ENCODE measurements at regions of chr10 and their contacts with region 1.

Region 1: DNA sequence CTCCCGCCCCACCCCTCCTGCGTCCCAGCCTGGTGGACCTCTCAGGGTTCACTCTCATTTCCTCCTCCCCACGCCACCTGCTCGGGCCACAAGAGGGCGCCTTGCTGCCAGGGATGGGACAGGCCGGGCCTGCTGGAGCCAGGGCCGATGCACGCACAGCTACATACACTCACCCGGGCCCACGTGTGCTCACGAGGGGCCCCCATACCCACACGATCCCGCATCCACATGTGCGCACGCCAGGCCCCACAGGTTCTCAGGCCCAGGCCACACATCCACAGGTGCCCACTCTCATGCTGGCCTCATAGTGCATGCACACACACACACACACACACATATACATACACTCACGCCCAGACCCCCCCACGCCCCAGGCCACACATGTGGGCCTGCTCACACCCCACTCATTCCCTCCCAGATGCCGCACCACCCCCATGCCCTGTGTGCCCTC is 68.6 kb downstream of the LHPP start:
- DNase-seq: peak; percentile 93
- ATAC-seq: peak; percentile 86
- H3K4me3 ChIP-seq: no peak overlapping the region
- H3K4me3 Mint-ChIP-seq: peak overlapping the region; percentile 74
- H3K27ac ChIP-seq: no peak overlapping the region
- H3K27ac Mint-ChIP-seq: peak overlapping the region; percentile 92
- H3K4me1 ChIP-seq: peaks cover 37 to 53% of the 10 kb centered on the region in 2 donors
- H3K4me1 Mint-ChIP-seq: peaks cover 50% of the 10 kb centered on the region
- H3K27me3 ChIP-seq: no peaks in the 10 kb centered on the region
- H3K27me3 Mint-ChIP-seq: no peaks in the 10 kb centered on the region
- CTCF ChIP-seq: peak; percentile 86

Region 2: DNA sequence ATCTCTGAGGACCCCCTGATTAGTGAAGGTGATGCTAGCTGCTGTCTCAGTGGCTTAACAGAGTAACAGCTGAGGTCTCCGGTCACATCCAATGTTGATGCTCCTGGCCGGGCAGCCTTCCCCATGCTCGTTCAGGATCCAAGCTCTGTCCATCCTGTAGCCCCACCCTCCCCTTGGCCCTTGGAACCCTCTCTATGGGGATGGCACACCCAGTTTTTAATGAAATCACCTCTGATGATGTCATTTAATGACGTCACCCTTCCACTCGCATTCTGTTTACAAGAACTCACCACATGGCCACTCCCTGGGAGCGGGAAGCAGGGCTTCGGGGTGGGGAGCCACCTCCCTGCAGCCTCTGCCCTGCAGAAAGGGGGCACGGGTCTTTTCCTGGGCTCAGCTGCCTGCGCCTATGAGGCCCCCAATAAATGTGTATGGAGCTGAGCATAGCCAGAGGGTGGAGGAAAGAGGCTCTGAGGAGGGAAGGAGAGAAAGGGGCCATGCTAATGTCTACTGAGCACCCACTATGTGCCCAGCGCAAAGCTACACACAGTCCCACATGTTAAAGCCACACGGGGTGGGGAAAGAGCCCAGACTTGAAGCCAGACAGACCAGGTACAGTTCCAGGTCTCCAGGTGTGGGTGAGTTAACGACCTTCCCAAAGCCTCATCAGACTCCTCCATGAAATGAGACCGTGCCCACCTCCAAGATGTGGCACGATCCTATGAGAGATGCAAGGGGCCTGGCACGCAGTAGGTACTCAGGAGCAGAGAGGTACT is 206.9 kb before region 1 on chr10:
- CTCF ChIA-PET with region 1: no interaction called
- POLR2A ChIA-PET with region 1: no interaction called
- intact Hi-C with region 1: no loop called
- DNase-seq: no peak
- ATAC-seq: no peak
- H3K4me3 ChIP-seq: no peak overlapping the region
- H3K4me3 Mint-ChIP-seq: no peak overlapping the region
- H3K27ac ChIP-seq: no peak overlapping the region
- H3K27ac Mint-ChIP-seq: no peak overlapping the region
- H3K4me1 ChIP-seq: no peaks in the 10 kb centered on the region
- H3K4me1 Mint-ChIP-seq: no peaks in the 10 kb centered on the region
- H3K27me3 ChIP-seq: no peaks in the 10 kb centered on the region
- H3K27me3 Mint-ChIP-seq: peaks cover 20% of the 10 kb centered on the region
- CTCF ChIP-seq: no peak

Region 3: DNA sequence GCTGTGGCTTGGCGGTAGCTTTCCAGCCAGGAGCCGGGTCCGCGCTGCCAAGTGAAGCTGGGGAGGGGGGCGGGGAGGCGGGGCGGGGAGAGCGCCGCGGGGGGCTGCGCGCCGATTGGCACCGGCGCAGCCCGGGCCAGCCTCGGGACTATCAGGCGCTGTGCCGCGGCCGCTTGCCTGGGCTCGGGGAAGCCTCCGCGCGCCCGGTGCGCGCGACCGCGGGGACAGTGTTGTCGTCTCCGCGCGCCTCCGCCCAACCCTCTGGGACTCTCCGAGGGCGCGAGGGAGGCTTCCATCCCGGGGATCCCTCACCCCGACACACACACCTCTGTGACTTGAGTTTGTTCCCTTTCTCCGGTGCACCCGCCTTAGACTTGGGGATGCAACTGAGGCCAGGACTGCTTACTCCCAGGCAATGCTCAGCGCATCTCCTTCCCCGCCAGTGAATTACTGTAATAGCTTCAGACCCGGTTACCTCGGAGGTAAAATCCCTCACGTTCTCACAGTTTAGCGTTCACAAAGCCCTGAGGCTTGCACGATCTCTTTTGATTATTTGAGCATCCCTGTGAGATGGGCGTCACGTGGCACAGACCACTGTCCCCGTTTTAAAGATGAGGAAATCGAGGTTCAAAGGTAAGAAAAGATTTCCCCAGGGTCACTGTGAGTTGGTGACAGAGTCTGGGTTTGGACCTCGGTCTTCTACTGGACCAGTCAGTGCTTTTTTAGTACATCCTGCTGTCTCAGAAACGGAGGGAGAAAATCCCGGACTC is 80.0 kb before region 1 on chr10 and contains the start of gene NKX1-2:
- CTCF ChIA-PET with region 1: no interaction called
- POLR2A ChIA-PET with region 1: no interaction called
- intact Hi-C with region 1: no loop called
- DNase-seq: peak; percentile 46
- ATAC-seq: no peak
- H3K4me3 ChIP-seq: peak within 1 kb of the TSS in 2 of 5 experiments; percentile 9 to 16
- H3K4me3 Mint-ChIP-seq: peak within 1 kb of the TSS; percentile 81
- H3K27ac ChIP-seq: no peak within 1 kb of the TSS
- H3K27ac Mint-ChIP-seq: no peak within 1 kb of the TSS
- H3K4me1 ChIP-seq: peaks cover 31 to 42% of the 10 kb centered on the region in 2 donors
- H3K4me1 Mint-ChIP-seq: peaks cover 28% of the 10 kb centered on the region
- H3K27me3 ChIP-seq: peaks cover 0 to 77% (median 52%) of the 10 kb centered on the region in 4 experiments
- H3K27me3 Mint-ChIP-seq: peaks cover 75% of the 10 kb centered on the region
- CTCF ChIP-seq: no peak
- total RNA-seq, gene NKX1-2: not detected in 2 replicates

Region 4: DNA sequence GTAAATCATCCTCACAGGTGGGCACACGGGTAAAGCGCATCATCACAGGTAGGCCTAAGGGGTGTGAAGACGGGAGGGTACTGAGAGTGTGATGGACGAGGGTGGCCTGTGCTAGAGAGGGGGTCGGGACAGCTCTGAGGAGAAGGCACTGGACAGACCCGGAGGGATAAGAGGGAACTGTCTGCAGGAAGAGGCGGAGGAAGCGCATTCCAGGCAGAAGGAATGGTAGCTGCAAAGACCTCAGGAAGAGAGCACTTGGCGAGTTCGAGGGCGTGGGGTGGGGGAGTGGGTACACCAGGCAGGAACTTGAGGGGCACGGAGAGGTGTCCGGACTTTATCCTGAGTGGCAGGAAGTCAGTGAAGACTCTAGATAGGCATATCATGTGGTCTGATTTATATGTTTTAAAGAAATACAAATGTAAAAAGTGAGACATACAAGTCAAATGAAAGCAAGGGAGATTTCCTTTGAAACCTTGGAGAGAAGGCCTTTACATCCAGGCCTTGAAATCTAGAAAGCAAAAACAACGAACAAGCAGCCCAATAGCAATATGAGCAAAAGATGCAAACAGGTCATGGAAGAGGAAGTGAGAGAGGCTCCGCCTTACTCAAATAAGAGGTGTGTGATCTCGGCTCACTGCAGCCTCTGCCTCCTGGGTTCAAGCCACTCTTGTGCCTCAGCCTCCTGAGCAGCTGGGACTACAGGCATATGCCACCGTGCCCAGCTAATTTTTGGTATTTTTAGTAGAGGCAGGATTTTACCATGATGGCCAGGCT is 65.0 kb before region 1 on chr10:
- CTCF ChIA-PET with region 1: no interaction called
- POLR2A ChIA-PET with region 1: no interaction called
- intact Hi-C with region 1: no loop called
- DNase-seq: peak; percentile 66
- ATAC-seq: peak; percentile 35
- H3K4me3 ChIP-seq: peak overlapping the region in 3 of 5 experiments; percentile 13 to 26 (median 23)
- H3K4me3 Mint-ChIP-seq: peak overlapping the region; percentile 64
- H3K27ac ChIP-seq: peak overlapping the region; percentile 67 to 69
- H3K27ac Mint-ChIP-seq: peak overlapping the region; percentile 92
- H3K4me1 ChIP-seq: peaks cover 23 to 35% of the 10 kb centered on the region in 2 donors
- H3K4me1 Mint-ChIP-seq: peaks cover 37% of the 10 kb centered on the region
- H3K27me3 ChIP-seq: no peaks in the 10 kb centered on the region
- H3K27me3 Mint-ChIP-seq: no peaks in the 10 kb centered on the region
- CTCF ChIP-seq: no peak

Region 5: GRCh38 chr10:124565565-124566256 is 35.5 kb after region 1 on chr10:
- CTCF ChIA-PET with region 1: interaction called, 27 read pairs
- POLR2A ChIA-PET with region 1: interaction called, 3 read pairs
- intact Hi-C with region 1: loop called (anchors 5 kb)
- DNase-seq: peak; percentile 49
- ATAC-seq: peak; percentile 45
- H3K4me3 ChIP-seq: no peak overlapping the region
- H3K4me3 Mint-ChIP-seq: no peak overlapping the region
- H3K27ac ChIP-seq: no peak overlapping the region
- H3K27ac Mint-ChIP-seq: no peak overlapping the region
- H3K4me1 ChIP-seq: peaks cover 35 to 40% of the 10 kb centered on the region in 2 donors
- H3K4me1 Mint-ChIP-seq: peaks cover 51% of the 10 kb centered on the region
- H3K27me3 ChIP-seq: no peaks in the 10 kb centered on the region
- H3K27me3 Mint-ChIP-seq: no peaks in the 10 kb centered on the region
- CTCF ChIP-seq: no peak

Region 6: DNA sequence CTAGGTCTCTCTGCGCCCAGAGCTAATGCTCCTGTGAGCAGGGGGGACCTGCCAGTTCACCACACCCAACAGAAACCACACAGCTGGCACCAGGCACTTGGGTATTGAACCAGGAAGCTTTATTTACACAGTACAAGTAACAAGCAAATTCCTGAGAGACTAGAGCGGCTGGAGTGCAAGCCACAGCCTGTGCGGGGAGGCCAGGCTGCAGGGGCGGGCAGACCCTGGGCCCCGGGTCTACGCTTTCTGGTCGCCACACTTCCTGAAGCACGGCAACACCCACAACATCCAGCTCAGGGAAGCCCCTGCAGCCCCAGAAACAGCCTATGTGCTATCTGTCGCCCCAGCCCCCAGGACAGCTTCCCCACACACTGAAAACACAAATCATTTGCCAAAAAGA is 89.0 kb after region 1 on chr10:
- CTCF ChIA-PET with region 1: interaction called, 100 read pairs
- POLR2A ChIA-PET with region 1: interaction called, 9 read pairs
- intact Hi-C with region 1: no loop called
- DNase-seq: peak; percentile 84
- ATAC-seq: peak; percentile 75
- H3K4me3 ChIP-seq: peak overlapping the region in 4 of 5 experiments; percentile 19 to 55 (median 28)
- H3K4me3 Mint-ChIP-seq: peak overlapping the region; percentile 87
- H3K27ac ChIP-seq: peak overlapping the region; percentile 97 to 98
- H3K27ac Mint-ChIP-seq: peak overlapping the region; percentile 99
- H3K4me1 ChIP-seq: peaks cover 96 to 100% of the 10 kb centered on the region in 2 donors
- H3K4me1 Mint-ChIP-seq: peaks cover 93% of the 10 kb centered on the region
- H3K27me3 ChIP-seq: no peaks in the 10 kb centered on the region
- H3K27me3 Mint-ChIP-seq: no peaks in the 10 kb centered on the region
- CTCF ChIP-seq: no peak

Region 7: GRCh38 chr10:124647421-124648130 is 117.3 kb after region 1 on chr10:
- CTCF ChIA-PET with region 1: interaction called, 24 read pairs
- POLR2A ChIA-PET with region 1: no interaction called
- intact Hi-C with region 1: no loop called
- DNase-seq: peak; percentile 80
- ATAC-seq: peak; percentile 78
- H3K4me3 ChIP-seq: peak overlapping the region in 4 of 5 experiments; percentile 15 to 45 (median 26)
- H3K4me3 Mint-ChIP-seq: peak overlapping the region; percentile 85
- H3K27ac ChIP-seq: peak overlapping the region; percentile 71 to 92
- H3K27ac Mint-ChIP-seq: peak overlapping the region; percentile 97
- H3K4me1 ChIP-seq: peaks cover 99 to 100% of the 10 kb centered on the region in 2 donors
- H3K4me1 Mint-ChIP-seq: peaks cover 99% of the 10 kb centered on the region
- H3K27me3 ChIP-seq: no peaks in the 10 kb centered on the region
- H3K27me3 Mint-ChIP-seq: no peaks in the 10 kb centered on the region
- CTCF ChIP-seq: peak; percentile 25

Region 8: GRCh38 chr10:124732931-124733570 is 202.8 kb after region 1 on chr10:
- CTCF ChIA-PET with region 1: interaction called, 24 read pairs
- POLR2A ChIA-PET with region 1: no interaction called
- intact Hi-C with region 1: no loop called
- DNase-seq: peak; percentile 61
- ATAC-seq: peak; percentile 34
- H3K4me3 ChIP-seq: peak overlapping the region in 2 of 5 experiments; percentile 13 to 39
- H3K4me3 Mint-ChIP-seq: peak overlapping the region; percentile 52
- H3K27ac ChIP-seq: peak overlapping the region; percentile 80 to 98
- H3K27ac Mint-ChIP-seq: peak overlapping the region; percentile 79
- H3K4me1 ChIP-seq: peaks cover 99 to 100% of the 10 kb centered on the region in 2 donors
- H3K4me1 Mint-ChIP-seq: peaks cover 97% of the 10 kb centered on the region
- H3K27me3 ChIP-seq: no peaks in the 10 kb centered on the region
- H3K27me3 Mint-ChIP-seq: no peaks in the 10 kb centered on the region
- CTCF ChIP-seq: no peak